ENCODE measurements at regions of chr17 and their contacts with region 1.

Region 1: DNA sequence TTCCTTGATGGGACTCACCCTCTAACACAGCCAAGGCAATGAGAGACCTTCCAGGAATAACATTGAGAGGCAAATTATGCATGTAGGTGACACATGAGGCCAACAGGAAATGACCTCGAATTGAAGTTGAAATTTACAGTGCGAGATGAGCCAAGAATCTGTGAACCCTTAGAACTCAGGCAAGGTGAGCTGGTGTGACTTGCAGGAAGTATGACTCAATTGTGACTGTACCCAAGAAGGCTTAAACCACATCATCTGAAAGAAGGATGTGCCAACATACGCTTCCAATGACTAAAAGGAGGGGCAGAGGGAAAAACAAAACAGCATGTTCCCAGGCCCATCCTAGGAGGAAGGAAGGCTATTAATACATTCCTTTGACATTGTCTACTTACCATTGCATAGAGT is 44.8 kb downstream of the PITPNC1 start:
- DNase-seq: peak; percentile 78
- H3K4me3 Mint-ChIP-seq: no peak overlapping the region
- H3K27ac Mint-ChIP-seq: peak overlapping the region; percentile 97
- H3K4me1 Mint-ChIP-seq: peaks cover 91% of the 10 kb centered on the region
- H3K27me3 Mint-ChIP-seq: no peaks in the 10 kb centered on the region

Region 2: GRCh38 chr17:67400193-67400592 is 21.7 kb before region 1 on chr17:
- CTCF ChIA-PET with region 1: interaction called, 3 read pairs
- intact Hi-C with region 1: loop called (anchors 1 kb)
- DNase-seq: no peak
- H3K4me3 Mint-ChIP-seq: peak overlapping the region; percentile 74
- H3K27ac Mint-ChIP-seq: peak overlapping the region; percentile 96
- H3K4me1 Mint-ChIP-seq: peaks cover 75% of the 10 kb centered on the region
- H3K27me3 Mint-ChIP-seq: no peaks in the 10 kb centered on the region

Region 3: GRCh38 chr17:67441052-67441927 is 19.4 kb after region 1 on chr17:
- CTCF ChIA-PET with region 1: interaction called, 4 read pairs
- intact Hi-C with region 1: loop called (anchors 1 kb)
- DNase-seq: peak; percentile 90
- H3K4me3 Mint-ChIP-seq: peak overlapping the region; percentile 75
- H3K27ac Mint-ChIP-seq: peak overlapping the region; percentile 96
- H3K4me1 Mint-ChIP-seq: peaks cover 76% of the 10 kb centered on the region
- H3K27me3 Mint-ChIP-seq: no peaks in the 10 kb centered on the region

Region 4: DNA sequence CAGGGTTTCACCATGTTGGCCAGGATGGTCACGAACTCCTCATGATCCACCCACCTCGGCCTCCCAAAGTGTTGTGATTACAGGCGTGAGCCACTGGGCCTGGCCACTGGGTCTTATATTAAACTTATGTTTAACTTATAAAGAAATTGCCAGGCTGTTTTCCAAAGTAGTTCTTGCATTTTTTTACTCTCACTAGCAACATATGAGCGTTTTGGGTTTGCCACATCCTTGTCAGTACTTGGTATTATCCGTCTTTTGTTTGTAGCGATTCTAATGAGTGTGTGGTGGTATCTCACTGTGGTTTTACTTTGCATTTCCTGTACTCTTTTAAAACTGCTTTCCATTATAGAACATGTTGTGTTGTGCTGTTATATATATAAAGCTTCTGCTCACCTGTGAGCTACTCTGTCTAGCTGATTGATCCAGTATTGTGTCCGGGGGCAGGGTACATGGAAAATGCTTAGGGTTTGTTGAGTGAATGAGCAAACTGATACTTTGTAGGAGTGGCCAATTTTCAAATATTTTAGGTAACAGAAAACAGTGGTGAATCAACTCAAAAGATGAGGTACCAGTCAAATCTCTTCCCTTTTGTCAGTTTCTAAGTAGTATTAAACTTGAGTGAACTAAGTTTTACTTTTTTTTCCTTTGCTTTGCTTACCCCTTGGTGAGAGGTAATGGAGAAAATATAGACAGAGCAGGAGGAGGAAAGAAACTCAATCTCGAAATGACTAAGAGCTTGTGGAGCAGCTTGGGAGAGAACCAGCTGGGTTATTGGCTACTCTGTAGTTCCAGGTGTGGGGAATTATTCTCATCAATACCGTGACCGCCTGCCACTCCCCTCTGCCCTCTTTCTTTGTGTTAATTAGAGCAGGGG is 31.0 kb after region 1 on chr17:
- CTCF ChIA-PET with region 1: no interaction called
- intact Hi-C with region 1: loop called (anchors 1 kb)
- DNase-seq: peak; percentile 65
- H3K4me3 Mint-ChIP-seq: peak overlapping the region; percentile 53
- H3K27ac Mint-ChIP-seq: peak overlapping the region; percentile 91
- H3K4me1 Mint-ChIP-seq: peaks cover 91% of the 10 kb centered on the region
- H3K27me3 Mint-ChIP-seq: no peaks in the 10 kb centered on the region

Measured in activated naive CD4-positive, alpha-beta T cell treated with anti-CD3 and anti-CD28 coated beads for 36 hours (primary cell).